ENCODE measurements at regions of chr5 and their contacts with region 1.

Region 1: DNA sequence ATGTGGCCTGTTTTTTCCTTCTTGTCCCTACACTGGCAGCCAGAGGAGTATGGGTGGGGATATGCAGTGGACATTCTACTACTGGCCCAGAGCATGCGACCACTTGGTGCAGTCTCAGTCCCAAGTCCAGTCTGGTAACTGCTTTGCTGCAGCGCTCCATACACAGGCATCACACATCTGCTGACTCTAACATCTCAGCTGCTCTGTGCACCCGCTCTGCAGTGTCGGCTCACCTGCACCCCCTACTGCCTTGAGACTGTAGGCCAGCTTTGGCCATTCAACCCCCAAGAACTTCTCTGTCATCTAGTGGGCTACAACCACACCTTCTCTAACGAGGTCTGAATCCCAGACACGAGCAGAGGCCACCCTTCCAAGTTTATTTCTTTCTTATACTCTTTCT is 46.4 kb upstream of the SLCO6A1 start:
- DNase-seq: no peak
- CTCF ChIP-seq: no peak

Region 2: GRCh38 chr5:102289251-102289899 is 255.8 kb before region 1 on chr5:
- CTCF ChIA-PET with region 1: no interaction called
- POLR2A ChIA-PET with region 1: no interaction called
- DNase-seq: no peak
- CTCF ChIP-seq: no peak

Region 3: DNA sequence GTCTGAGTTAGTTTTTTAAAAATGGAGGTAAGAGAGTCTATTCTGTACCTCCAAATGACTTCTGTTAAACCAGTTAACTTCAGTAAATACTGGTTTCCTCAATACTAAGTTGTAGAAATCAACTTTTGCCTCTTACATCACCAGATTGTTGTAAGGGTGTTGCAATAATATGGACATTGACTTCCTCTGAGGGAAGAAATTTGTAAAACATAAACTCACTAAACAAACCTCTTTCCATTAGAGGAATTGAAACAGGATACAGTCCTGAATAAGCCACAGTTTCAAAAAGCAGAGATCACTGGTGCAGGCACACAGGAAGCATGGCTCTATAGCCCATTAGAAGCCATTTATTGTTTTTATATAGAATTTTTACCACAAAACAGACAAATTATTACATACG is 13.7 kb before region 1 on chr5:
- CTCF ChIA-PET with region 1: interaction called, 10 read pairs
- POLR2A ChIA-PET with region 1: no interaction called
- DNase-seq: no peak
- CTCF ChIP-seq: no peak

Region 4: DNA sequence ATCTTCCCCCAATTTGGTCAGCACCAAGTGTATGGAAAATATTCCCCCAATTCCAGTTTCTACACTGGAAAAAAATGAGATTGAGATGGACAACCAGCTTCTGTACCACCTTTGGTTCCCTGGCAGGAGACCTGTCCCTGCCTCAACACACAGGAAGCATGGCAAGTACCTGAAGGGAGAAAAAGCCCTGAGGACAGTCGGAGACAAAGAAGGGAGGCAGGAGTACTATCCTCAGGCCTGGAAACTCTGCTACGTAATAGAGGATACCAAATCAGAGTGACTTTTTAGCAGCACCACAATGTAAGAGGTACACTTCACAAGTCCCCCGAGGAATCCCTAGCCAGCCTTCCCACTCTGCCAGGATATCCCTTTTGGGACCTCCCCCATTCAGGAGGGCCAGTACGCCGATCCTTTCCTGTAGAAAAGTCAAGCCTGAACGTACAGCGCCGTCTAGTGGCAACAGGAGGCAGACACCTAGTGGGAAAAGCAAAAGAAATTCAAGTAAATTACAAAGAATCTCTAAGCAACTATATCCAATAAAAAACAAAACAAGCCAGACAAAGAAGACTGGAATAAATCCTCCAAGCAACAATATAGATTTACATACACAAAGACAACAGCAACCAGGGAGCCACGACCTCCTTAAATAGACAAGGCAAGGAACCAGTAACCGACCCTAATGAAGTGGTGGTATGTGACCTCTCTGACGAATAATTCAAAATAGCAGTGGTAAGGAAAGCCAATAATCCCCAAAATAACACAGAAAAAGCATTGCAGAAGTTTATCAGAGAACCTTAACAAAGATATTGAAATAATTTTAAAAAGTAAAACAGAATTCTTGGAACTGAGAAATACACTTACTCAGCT is 17.0 kb after region 1 on chr5:
- CTCF ChIA-PET with region 1: interaction called, 11 read pairs
- POLR2A ChIA-PET with region 1: no interaction called
- DNase-seq: no peak
- CTCF ChIP-seq: peak; percentile 58

Region 5: GRCh38 chr5:102754767-102755431 is 209.7 kb after region 1 on chr5 and contains the start of gene PAM:
- CTCF ChIA-PET with region 1: no interaction called
- POLR2A ChIA-PET with region 1: no interaction called
- DNase-seq: peak; percentile 92
- CTCF ChIP-seq: no peak